ENCODE measurements at regions of chr20 and their contacts with region 1.

Region 1: GRCh38 chr20:45111799-45112471 is 3.0 kb downstream of the WFDC5 start:
- DNase-seq: peak in 1 of 2 experiments; percentile 75
- H3K4me3 ChIP-seq: no peak overlapping the region; a peak in 2 of 8 replicates
- H3K27ac ChIP-seq: no peak overlapping the region
- H3K4me1 ChIP-seq: peaks cover 0 to 7% (median 2%) of the 10 kb centered on the region in 4 experiments; a peak in 5 of 7 replicates
- H3K27me3 ChIP-seq: no peaks in the 10 kb centered on the region
- CTCF ChIP-seq: peak; percentile 63 to 69 (median 64)
- EP300 ChIP-seq: no peak
- POLR2A ChIP-seq: no peak
- RAD21 ChIP-seq: peak; percentile 50 to 61

Region 2: DNA sequence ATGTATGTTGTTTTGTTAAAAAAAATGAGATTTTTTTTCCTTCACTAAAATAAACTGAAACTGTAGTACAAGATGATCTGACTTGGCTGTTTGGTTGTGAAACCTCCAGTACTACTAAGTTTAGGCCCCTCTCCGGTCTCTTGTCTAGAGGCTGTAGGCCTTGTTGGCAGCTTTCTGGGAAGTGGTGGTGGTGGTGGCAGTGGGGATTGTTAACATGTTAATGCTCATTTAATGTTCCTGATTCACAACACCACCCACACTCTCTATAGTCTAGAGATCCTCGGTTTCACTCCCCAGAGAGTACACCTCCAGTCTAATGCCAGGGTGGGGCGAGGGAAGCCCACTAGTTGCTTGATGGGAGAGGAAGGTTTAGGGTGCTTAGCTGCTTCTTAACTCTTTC is 121.5 kb before region 1 on chr20:
- CTCF ChIA-PET with region 1: no interaction called
- POLR2A ChIA-PET with region 1: no interaction called
- DNase-seq: no peak
- H3K4me3 ChIP-seq: no peak overlapping the region
- H3K27ac ChIP-seq: no peak overlapping the region
- H3K4me1 ChIP-seq: no peaks in the 10 kb centered on the region; a peak in 1 of 7 replicates
- H3K27me3 ChIP-seq: no peaks in the 10 kb centered on the region
- CTCF ChIP-seq: no peak
- EP300 ChIP-seq: no peak
- POLR2A ChIP-seq: no peak
- RAD21 ChIP-seq: no peak

Region 3: GRCh38 chr20:45011108-45011526 is 100.8 kb before region 1 on chr20:
- CTCF ChIA-PET with region 1: interaction called, 31 read pairs
- POLR2A ChIA-PET with region 1: no interaction called
- DNase-seq: peak in 1 of 2 experiments; percentile 55
- H3K4me3 ChIP-seq: no peak overlapping the region
- H3K27ac ChIP-seq: no peak overlapping the region
- H3K4me1 ChIP-seq: no peaks in the 10 kb centered on the region; a peak in 1 of 7 replicates
- H3K27me3 ChIP-seq: no peaks in the 10 kb centered on the region
- CTCF ChIP-seq: peak in 2 of 3 experiments; percentile 65 to 73; a peak in 3 of 4 replicates
- EP300 ChIP-seq: no peak
- POLR2A ChIP-seq: no peak
- RAD21 ChIP-seq: peak; percentile 85 to 86

Region 4: DNA sequence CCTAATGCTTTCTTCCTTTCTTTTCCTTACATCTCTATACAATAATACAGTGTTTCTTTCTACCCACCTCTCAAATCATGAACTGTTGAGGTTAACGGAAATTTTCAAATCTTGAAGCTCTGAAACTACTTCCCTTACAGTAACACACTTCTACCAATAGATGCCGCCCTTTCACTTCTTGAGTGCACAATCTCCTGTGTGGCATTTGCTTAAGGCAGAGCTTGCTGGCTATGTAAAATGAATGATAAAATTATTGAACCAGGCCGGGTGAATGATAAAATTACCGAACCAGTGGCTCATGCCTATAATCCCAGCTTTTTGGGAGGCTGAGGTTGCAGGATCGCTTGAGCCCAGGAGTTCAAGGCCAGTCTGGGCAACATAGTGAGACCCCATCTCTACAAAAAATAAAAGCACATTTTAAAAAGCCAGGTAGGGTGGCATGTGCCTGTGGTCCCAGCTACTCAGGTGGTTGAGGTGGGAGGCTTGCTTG is 67.8 kb before region 1 on chr20:
- CTCF ChIA-PET with region 1: interaction called, 233 read pairs
- POLR2A ChIA-PET with region 1: interaction called, 3 read pairs
- DNase-seq: peak in 1 of 2 experiments; percentile 13
- H3K4me3 ChIP-seq: no peak overlapping the region
- H3K27ac ChIP-seq: no peak overlapping the region
- H3K4me1 ChIP-seq: peaks cover 0 to 14% (median 2%) of the 10 kb centered on the region in 4 experiments; a peak in 3 of 7 replicates
- H3K27me3 ChIP-seq: no peaks in the 10 kb centered on the region
- CTCF ChIP-seq: peak in 2 of 3 experiments; percentile 67 to 85; a peak in 2 of 4 replicates
- EP300 ChIP-seq: no peak
- POLR2A ChIP-seq: no peak
- RAD21 ChIP-seq: peak; percentile 84 to 86

Region 5: GRCh38 chr20:45088247-45088646 is 23.7 kb before region 1 on chr20:
- CTCF ChIA-PET with region 1: interaction called, 210 read pairs
- POLR2A ChIA-PET with region 1: interaction called, 4 read pairs
- DNase-seq: no peak
- H3K4me3 ChIP-seq: no peak overlapping the region
- H3K27ac ChIP-seq: no peak overlapping the region
- H3K4me1 ChIP-seq: no peaks in the 10 kb centered on the region; a peak in 1 of 7 replicates
- H3K27me3 ChIP-seq: no peaks in the 10 kb centered on the region
- CTCF ChIP-seq: no peak
- EP300 ChIP-seq: no peak
- POLR2A ChIP-seq: no peak
- RAD21 ChIP-seq: no peak

Region 6: GRCh38 chr20:45128071-45128470 is 16.1 kb after region 1 on chr20:
- CTCF ChIA-PET with region 1: interaction called, 14 read pairs
- POLR2A ChIA-PET with region 1: no interaction called
- DNase-seq: no peak
- H3K4me3 ChIP-seq: no peak overlapping the region
- H3K27ac ChIP-seq: no peak overlapping the region
- H3K4me1 ChIP-seq: no peaks in the 10 kb centered on the region
- H3K27me3 ChIP-seq: no peaks in the 10 kb centered on the region; a peak in 1 of 7 replicates
- CTCF ChIP-seq: no peak
- EP300 ChIP-seq: no peak
- POLR2A ChIP-seq: no peak
- RAD21 ChIP-seq: no peak

Region 7: DNA sequence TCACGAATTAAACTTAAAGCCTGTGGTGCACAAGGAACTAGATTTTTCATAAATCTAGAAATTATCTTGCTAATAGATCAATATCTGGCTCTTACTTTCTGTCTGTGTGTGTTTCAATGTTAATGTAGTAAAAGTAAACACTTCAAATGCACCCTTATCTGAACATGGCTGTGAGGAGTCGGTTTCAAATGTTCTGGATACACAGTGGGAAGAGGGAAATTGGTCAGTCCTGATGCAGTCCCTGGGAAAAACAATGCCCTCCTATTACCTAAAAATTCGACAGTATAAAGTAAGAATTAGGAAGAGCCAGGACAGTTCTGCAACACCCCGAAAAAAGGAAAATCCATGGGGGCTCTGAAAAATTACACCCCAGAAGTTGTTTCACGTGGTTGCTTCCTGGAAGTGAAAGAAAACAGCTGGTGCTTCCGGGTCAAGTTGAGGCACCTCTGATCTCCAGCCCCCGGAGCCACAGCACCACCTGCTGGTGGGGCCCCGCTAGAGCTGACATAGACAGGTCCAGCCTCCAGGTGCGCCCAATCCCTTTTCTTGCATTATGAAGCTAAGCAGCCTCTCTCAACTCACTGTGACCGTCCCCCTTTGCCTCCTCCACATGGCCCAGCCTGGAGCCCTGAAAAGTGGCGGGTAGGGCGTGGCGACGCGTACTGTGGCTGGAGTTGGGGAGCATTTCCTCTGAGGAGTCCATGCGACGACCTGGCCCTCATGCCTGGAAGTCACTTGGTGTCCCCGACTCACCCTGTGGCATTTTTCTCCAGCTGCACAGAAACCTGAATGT is 117.5 kb after region 1 on chr20:
- CTCF ChIA-PET with region 1: interaction called, 10 read pairs
- POLR2A ChIA-PET with region 1: no interaction called
- DNase-seq: peak; percentile 21 to 96
- H3K4me3 ChIP-seq: no peak overlapping the region
- H3K27ac ChIP-seq: no peak overlapping the region
- H3K4me1 ChIP-seq: no peaks in the 10 kb centered on the region
- H3K27me3 ChIP-seq: no peaks in the 10 kb centered on the region; a peak in 1 of 7 replicates
- CTCF ChIP-seq: peak; percentile 91 to 97 (median 93)
- EP300 ChIP-seq: no peak
- POLR2A ChIP-seq: no peak
- RAD21 ChIP-seq: peak; percentile 85 to 90

Region 8: GRCh38 chr20:45322952-45323383 is 211.0 kb after region 1 on chr20:
- CTCF ChIA-PET with region 1: no interaction called
- POLR2A ChIA-PET with region 1: no interaction called
- DNase-seq: no peak
- H3K4me3 ChIP-seq: no peak overlapping the region
- H3K27ac ChIP-seq: no peak overlapping the region
- H3K4me1 ChIP-seq: no peaks in the 10 kb centered on the region; a peak in 1 of 7 replicates
- H3K27me3 ChIP-seq: no peaks in the 10 kb centered on the region
- CTCF ChIP-seq: peak in 2 of 3 experiments; percentile 42 to 54; a peak in 3 of 4 replicates
- EP300 ChIP-seq: no peak
- POLR2A ChIP-seq: no peak
- RAD21 ChIP-seq: peak; percentile 73 to 82